ENCODE measurements at regions of chr1 and their contacts with region 1.

Region 1: DNA sequence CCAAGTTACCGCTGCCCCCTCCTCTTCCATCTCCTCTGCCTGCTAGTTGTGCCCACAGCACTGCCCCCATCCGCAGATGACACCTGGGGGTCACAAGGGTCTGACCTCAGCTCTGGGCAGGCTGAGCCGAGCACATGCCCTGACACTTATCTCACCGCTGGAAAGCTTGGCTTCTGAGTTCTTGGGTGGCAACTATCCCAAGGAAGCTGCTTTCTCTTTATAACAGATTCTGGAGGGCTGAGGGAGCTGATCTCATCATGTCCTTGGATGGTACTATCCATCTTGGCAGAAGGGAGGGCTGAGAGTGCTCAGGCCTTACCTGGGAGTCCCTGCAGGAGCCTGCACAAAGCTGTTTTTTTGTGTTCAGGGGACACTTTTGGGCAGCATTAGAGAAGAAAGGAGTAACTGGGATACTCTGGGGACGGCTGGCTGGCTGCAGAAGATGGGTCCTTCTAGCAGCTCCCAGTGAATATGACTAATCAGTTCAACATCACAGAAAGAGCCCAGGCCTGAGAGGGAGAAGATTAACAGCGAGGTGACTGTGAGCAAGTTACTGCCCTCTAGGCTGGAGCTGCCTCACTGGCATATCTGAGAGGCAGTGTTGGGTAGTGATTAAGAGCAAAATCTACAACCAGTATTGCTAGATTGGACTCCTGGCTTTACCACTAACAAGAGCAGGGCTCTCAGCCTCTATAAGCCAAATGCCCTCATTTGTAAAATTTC is 71.6 kb downstream of the PLXNA2 start:
- DNase-seq: no peak
- CTCF ChIP-seq: no peak

Region 2: GRCh38 chr1:208161656-208162375 is 10.8 kb before region 1 on chr1:
- CTCF ChIA-PET with region 1: interaction called, 10 read pairs
- POLR2A ChIA-PET with region 1: no interaction called
- DNase-seq: no peak
- CTCF ChIP-seq: no peak